PC-3 (cell line): ENCODE measurements at regions of chr1 and their contacts with region 1.

Region 1: GRCh38 chr1:145720877-145721671 is 1.8 kb downstream of the CD160 start:
- DNase-seq: peak; percentile 83
- ATAC-seq: peak; percentile 90
- H3K4me3 ChIP-seq: peak overlapping the region; percentile 53
- H3K27ac ChIP-seq: peak overlapping the region; percentile 72
- H3K4me1 ChIP-seq: peaks cover 12% of the 10 kb centered on the region
- H3K27me3 ChIP-seq: no peaks in the 10 kb centered on the region
- CTCF ChIP-seq: peak; percentile 97

Region 2: DNA sequence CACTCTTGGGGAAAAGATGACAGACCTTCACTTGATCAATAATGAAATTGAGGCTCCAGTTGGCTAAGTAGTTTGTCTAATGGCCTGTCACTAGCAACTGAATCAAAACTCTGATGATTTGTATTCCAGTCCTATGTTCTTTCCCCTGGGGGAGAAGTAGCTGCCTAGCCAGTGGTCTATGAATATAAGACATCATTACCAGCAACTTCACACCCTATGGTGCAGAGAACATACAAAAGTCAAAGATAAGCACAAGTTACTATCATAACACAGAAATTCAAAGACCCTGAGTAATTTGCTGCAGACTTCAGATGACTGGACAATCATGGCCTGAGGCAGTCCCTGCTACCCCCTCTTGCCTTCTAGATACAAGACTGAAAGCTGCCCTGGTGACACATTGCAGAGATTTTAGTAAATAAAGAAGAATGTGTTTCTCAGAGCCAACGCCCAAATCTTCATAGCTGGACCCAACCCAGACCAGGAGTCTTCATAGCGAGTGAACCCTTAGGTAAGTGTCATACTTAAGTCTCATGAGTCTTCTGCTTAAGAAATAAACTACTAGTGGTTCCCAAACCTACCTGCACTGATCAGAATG is 14.9 kb before region 1 on chr1:
- CTCF ChIA-PET with region 1: interaction called, 4 read pairs
- POLR2A ChIA-PET with region 1: no interaction called
- intact Hi-C with region 1: loop called (anchors 2 kb)
- DNase-seq: peak; percentile 99
- ATAC-seq: peak; percentile 92
- H3K4me3 ChIP-seq: peak overlapping the region; percentile 10; the same call in 1 of the 2 replicates
- H3K27ac ChIP-seq: peak overlapping the region; percentile 80
- H3K4me1 ChIP-seq: peaks cover 31% of the 10 kb centered on the region
- H3K27me3 ChIP-seq: no peaks in the 10 kb centered on the region
- CTCF ChIP-seq: no peak

Region 3: DNA sequence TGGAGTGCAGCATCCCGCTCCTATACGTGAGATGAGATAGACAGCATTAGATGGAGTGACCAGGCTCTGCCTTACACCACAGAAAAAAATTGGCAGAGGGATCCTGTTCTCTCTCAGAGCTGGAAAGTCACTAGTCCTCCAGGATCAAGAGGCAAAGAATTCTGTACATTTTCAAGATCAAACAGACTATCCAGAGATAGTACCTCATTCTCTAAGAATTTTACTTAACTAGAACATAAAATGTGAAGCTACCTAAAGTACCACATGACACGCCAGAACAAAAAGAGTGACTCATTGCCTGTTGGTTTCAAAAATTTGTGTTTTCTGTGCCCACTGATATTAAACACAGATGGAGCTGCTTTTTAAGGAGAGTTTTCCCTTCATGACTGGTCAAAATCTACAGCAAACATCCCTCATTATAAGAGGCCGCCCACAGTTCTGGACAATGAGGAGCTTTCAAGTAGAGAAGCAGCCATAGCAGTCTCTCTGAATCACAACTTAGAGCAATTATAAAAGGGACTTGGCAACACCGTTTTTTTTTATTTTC is 30.5 kb after region 1 on chr1:
- CTCF ChIA-PET with region 1: no interaction called
- POLR2A ChIA-PET with region 1: no interaction called
- intact Hi-C with region 1: no loop called
- DNase-seq: peak; percentile 65
- ATAC-seq: peak; percentile 87
- H3K4me3 ChIP-seq: no peak overlapping the region
- H3K27ac ChIP-seq: peak overlapping the region; percentile 52
- H3K4me1 ChIP-seq: peaks cover 14% of the 10 kb centered on the region
- H3K27me3 ChIP-seq: no peaks in the 10 kb centered on the region
- CTCF ChIP-seq: 0 out of 2 replicates have a peak, but pooled peaks have one; percentile 12

Region 4: GRCh38 chr1:145823565-145824498 is 102.8 kb after region 1 on chr1 and contains the starts of genes POLR3C and RNF115:
- CTCF ChIA-PET with region 1: no interaction called
- POLR2A ChIA-PET with region 1: interaction called, 11 read pairs
- intact Hi-C with region 1: no loop called
- DNase-seq: peak; percentile 88
- ATAC-seq: peak; percentile 85
- H3K4me3 ChIP-seq: peak within 1 kb of the TSS; percentile 82
- H3K27ac ChIP-seq: peak within 1 kb of the TSS; percentile 68
- H3K4me1 ChIP-seq: peaks cover 18% of the 10 kb centered on the region
- H3K27me3 ChIP-seq: no peaks in the 10 kb centered on the region
- CTCF ChIP-seq: no peak
- total RNA-seq, gene POLR3C: 35.8 and 41.5 TPM in 2 replicates
- total RNA-seq, gene RNF115: 15.2 and 15.9 TPM in 2 replicates

Region 5: DNA sequence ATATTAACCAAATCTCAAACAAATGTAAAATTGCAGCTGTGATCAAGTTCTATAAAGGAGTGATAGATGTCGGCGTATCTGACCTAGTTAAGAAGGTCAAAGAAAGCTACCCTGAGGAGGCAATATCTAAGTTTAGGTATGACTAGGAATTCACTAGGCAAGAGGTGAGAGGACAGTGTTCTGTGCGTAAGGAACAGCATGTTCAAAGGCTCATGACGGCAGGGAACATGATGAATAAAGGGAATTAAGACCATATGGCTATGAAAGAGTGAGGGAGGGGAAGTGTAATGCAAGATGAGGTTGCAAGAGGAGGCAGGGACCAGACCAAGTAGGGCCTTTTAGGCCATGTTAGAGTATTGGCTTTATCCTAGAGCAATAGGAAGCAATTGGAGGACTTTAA is 228.1 kb after region 1 on chr1:
- CTCF ChIA-PET with region 1: no interaction called
- POLR2A ChIA-PET with region 1: no interaction called
- intact Hi-C with region 1: no loop called
- DNase-seq: no peak
- ATAC-seq: no peak
- H3K4me3 ChIP-seq: no peak overlapping the region
- H3K27ac ChIP-seq: no peak overlapping the region
- H3K4me1 ChIP-seq: no peaks in the 10 kb centered on the region
- H3K27me3 ChIP-seq: no peaks in the 10 kb centered on the region
- CTCF ChIP-seq: no peak